Dorsolateral prefrontal cortex (tissue), 120 donors: ENCODE measurements at regions of chr1 and their contacts with region 1.

Region 1: GRCh38 chr1:9101510-9102146 is 27.3 kb downstream of the GPR157 start:
- DNase-seq: peak in 4 of 10 donors; percentile 39 to 53 (median 43)
- H3K4me3 ChIP-seq: no peak overlapping the region
- H3K27ac ChIP-seq: no peak overlapping the region
- H3K27me3 ChIP-seq: no peaks in the 10 kb centered on the region
- CTCF ChIP-seq: peak in 53 of 56 donors; percentile 25 to 74 (median 51)

Region 2: DNA sequence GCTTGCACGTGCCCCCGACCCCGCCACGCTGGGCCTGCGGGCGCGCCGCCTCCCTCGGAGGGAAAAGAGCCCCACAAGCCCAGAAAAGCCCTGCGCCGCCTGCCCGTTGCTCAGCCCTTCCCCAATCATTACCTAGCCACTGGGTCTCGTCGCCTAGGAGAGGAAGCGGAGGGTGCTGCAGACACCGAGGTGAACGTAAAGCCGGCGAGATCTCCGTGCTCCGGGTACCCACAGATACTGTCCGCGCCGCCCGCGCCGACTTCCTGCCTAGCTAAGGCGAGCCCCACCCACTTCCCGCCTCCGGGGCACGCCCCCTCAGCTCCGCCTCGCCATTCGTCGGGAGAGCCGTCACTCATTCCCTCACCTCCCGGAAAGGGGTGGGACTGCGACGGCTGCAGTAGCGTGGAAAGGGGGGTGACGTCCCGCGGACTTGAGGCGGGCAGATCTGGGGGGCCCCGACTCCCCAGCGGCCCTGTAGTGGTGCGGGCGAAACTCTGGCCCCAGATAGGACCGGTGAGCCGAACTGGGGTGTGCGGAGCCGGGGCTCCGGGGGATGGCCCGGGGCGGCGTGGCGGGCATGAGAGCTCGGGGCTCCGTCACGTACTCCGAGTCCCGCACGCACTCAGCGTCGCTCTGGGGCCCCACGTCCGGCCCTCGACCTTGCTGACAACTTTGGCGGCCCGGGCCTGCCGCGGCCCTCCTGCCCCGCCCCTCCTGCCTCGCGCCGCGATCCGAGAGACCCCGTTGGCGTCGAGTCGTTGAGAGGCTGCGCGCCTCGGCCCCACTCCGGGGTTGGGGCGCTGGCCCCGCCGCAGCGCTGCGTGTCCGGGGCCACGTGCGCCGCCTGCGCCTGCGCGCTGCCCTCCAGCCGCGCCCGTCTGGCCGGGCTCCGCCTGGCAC is 222.9 kb before region 1 on chr1 and contains the start of gene ENO1:
- intact Hi-C with region 1: loop called in 1 of 2 experiments (anchors 10 kb)
- DNase-seq: peak; percentile 99 to 100 (median 99)
- H3K4me3 ChIP-seq: peak within 1 kb of the TSS; percentile 67 to 100 (median 95)
- H3K27ac ChIP-seq: peak within 1 kb of the TSS; percentile 71 to 100 (median 98)
- H3K27me3 ChIP-seq: no peaks in the 10 kb centered on the region
- CTCF ChIP-seq: peak in 8 of 56 donors; percentile 5 to 25 (median 15)
- total RNA-seq, gene ENO1: 469 to 938 (median 635) TPM

Region 3: GRCh38 chr1:8925406-8925805 is 176.2 kb before region 1 on chr1:
- intact Hi-C with region 1: loop called in 1 of 2 experiments (anchors 10 kb)
- DNase-seq: no peak
- H3K4me3 ChIP-seq: no peak overlapping the region
- H3K27ac ChIP-seq: no peak overlapping the region
- H3K27me3 ChIP-seq: no peaks in the 10 kb centered on the region
- CTCF ChIP-seq: no peak